H1 (cell line): ENCODE measurements at regions of chr3 and their contacts with region 1.

Region 1: GRCh38 chr3:42190701-42191462 is 75.1 kb downstream of the CCK start:
- DNase-seq: peak in 1 of 2 experiments; percentile 89
- H3K4me3 ChIP-seq: no peak overlapping the region
- H3K27ac ChIP-seq: no peak overlapping the region
- H3K4me1 ChIP-seq: peaks cover 0 to 3% (median 0%) of the 10 kb centered on the region in 4 experiments; a peak in 3 of 7 replicates
- H3K27me3 ChIP-seq: no peaks in the 10 kb centered on the region
- CTCF ChIP-seq: peak; percentile 61 to 88 (median 85)
- EP300 ChIP-seq: no peak
- POLR2A ChIP-seq: no peak
- RAD21 ChIP-seq: peak; percentile 78 to 83

Region 2: GRCh38 chr3:41893977-41894376 is 296.9 kb before region 1 on chr3:
- CTCF ChIA-PET with region 1: interaction called, 10 read pairs
- POLR2A ChIA-PET with region 1: no interaction called
- DNase-seq: no peak
- H3K4me3 ChIP-seq: no peak overlapping the region
- H3K27ac ChIP-seq: no peak overlapping the region
- H3K4me1 ChIP-seq: peaks cover 0 to 2% (median 0%) of the 10 kb centered on the region in 4 experiments; a peak in 3 of 7 replicates
- H3K27me3 ChIP-seq: no peaks in the 10 kb centered on the region
- CTCF ChIP-seq: peak in 1 of 3 experiments; percentile 5; a peak in 1 of 4 replicates
- EP300 ChIP-seq: no peak
- POLR2A ChIP-seq: no peak
- RAD21 ChIP-seq: peak; percentile 48 to 57

Region 3: DNA sequence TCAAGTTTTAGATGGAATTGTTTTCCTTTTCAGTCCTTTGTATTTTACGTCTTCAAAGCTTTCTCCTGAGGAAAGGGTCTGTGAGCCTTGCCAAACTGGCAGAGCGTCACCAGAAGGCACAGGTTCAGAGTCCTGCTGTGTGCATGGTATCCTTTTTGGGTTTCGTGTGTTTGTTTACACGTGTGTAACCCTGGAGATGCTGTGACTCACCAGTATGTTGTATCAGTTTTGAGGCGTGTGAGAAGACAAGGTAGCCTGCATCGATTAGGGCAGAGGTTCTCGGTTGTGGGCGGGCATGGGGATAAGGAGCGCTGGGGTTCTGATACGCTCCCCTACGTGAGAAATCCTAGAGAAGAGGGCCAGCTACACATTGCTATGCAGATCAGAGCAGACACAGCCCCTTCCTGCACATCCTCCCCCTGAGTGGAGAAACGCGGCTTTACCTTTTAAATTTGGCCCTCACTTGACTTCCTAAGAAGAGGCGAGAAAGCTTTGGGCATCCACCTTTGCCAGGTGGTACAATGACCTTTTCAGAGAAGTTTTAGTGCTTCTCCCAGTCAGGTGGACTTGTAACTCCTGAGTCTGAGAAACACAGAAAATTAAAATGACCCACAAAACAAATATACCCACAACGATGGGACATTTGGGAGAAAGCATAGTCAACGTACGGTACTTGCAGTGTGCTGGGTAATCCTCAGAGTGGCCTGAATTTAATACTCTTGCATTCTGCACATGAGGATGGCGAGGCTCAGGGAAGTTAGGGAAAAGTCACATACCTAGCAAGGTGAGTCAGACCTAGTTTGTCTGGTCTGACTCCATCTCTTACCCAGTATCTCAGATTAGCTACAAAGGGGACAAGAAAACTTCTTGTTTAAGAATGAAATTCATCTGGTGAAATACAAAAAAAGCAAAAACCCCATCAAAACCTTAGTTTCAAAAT is 61.6 kb before region 1 on chr3:
- CTCF ChIA-PET with region 1: interaction called, 17 read pairs
- POLR2A ChIA-PET with region 1: no interaction called
- DNase-seq: no peak
- H3K4me3 ChIP-seq: no peak overlapping the region
- H3K27ac ChIP-seq: no peak overlapping the region
- H3K4me1 ChIP-seq: peaks cover 0 to 5% (median 2%) of the 10 kb centered on the region in 4 experiments; a peak in 2 of 7 replicates
- H3K27me3 ChIP-seq: no peaks in the 10 kb centered on the region
- CTCF ChIP-seq: no peak
- EP300 ChIP-seq: no peak
- POLR2A ChIP-seq: no peak
- RAD21 ChIP-seq: no peak

Region 4: DNA sequence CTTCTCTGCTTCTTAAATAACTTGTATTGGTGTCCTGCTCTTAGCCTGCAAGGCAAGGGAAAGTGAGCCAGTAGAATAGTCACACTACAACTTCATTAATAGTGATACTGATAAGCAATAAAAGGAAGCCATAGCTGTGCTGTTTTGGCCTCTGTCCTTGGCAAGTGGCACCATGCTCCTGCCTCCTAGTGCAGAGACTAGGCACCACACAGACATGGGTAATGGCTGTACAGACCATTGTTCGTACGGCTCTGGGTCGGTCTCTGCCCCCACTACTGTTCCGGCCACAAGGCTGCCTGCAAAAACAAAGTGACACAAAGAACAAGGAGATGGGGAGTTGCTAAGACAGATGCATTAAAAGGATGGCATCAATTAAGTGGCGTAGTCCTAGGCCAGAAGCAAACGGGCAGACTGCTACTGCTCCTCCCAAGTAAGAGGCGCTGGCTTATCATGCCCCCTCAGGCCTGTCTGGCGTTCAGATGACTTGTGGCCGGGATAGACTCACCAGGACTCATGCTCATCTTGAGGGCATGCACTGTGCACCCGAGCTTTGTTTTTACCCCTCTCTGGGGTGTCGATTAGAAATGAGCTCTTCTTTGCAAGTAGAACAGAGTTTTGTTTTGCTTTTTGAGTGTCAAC is 24.1 kb before region 1 on chr3:
- CTCF ChIA-PET with region 1: interaction called, 34 read pairs
- POLR2A ChIA-PET with region 1: no interaction called
- DNase-seq: no peak
- H3K4me3 ChIP-seq: no peak overlapping the region
- H3K27ac ChIP-seq: no peak overlapping the region
- H3K4me1 ChIP-seq: no peaks in the 10 kb centered on the region; a peak in 2 of 7 replicates
- H3K27me3 ChIP-seq: no peaks in the 10 kb centered on the region
- CTCF ChIP-seq: no peak
- EP300 ChIP-seq: no peak
- POLR2A ChIP-seq: no peak
- RAD21 ChIP-seq: no peak

Region 5: GRCh38 chr3:42205800-42206514 is 15.1 kb after region 1 on chr3:
- CTCF ChIA-PET with region 1: interaction called, 27 read pairs
- POLR2A ChIA-PET with region 1: no interaction called
- DNase-seq: no peak
- H3K4me3 ChIP-seq: no peak overlapping the region
- H3K27ac ChIP-seq: no peak overlapping the region
- H3K4me1 ChIP-seq: peaks cover 0 to 6% (median 0%) of the 10 kb centered on the region in 4 experiments; a peak in 1 of 7 replicates
- H3K27me3 ChIP-seq: no peaks in the 10 kb centered on the region
- CTCF ChIP-seq: no peak
- EP300 ChIP-seq: no peak
- POLR2A ChIP-seq: no peak
- RAD21 ChIP-seq: no peak

Region 6: GRCh38 chr3:42224658-42225421 is 34.0 kb after region 1 on chr3:
- CTCF ChIA-PET with region 1: interaction called, 19 read pairs
- POLR2A ChIA-PET with region 1: no interaction called
- DNase-seq: no peak
- H3K4me3 ChIP-seq: no peak overlapping the region
- H3K27ac ChIP-seq: no peak overlapping the region
- H3K4me1 ChIP-seq: 0 out of 7 replicates have a peak, but pooled peaks cover 0 to 4% (median 0%) of the 10 kb centered on the region in 4 experiments
- H3K27me3 ChIP-seq: no peaks in the 10 kb centered on the region
- CTCF ChIP-seq: no peak
- EP300 ChIP-seq: no peak
- POLR2A ChIP-seq: no peak
- RAD21 ChIP-seq: no peak